Endothelial cell of umbilical vein (primary cell): ENCODE measurements at regions of chr2 and their contacts with region 1.

Region 1: DNA sequence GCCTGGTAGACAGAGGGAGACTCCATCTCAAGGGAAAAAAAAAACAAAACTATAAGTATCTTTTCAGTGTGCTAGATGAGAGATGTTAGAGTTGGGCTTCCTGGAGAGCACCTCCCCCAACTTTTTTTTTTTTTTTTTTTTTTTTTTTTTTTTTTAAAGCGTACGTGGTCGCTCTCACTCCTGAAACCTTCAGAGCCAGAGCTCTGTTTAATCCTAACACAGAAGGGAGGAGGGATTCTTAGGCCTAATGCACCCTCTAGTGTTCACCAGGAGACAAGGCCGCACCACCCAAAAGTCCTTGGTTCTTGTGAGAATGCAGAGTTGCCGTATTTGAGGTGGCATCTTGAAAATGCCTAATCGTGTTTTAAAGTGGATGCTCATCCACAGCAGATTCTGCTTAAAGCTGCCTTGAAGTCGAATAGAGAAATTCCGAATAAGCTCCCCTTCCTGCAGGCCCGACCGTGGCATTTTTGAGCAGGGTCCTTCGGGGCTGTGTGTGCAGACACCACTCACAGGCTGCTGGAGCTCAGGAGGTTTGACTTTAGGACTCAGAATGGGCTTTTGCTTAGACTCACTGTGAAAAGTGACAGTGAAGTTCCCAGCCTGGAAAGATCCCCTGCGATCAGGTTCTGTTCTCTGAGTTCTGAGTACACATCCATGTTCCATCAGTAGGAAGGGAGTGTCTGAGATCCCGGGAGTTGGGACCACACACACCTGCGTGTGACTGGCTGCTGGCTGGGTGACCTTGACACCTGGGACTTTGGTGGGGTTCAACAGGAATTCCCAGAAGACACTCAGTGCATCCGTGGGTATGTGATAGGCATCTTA is 252.6 kb downstream of the AGAP1 start:
- DNase-seq: peak; percentile 77
- H3K4me3 ChIP-seq: no peak overlapping the region
- H3K27ac ChIP-seq: no peak overlapping the region
- H3K4me1 ChIP-seq: no peaks in the 10 kb centered on the region
- H3K27me3 ChIP-seq: no peaks in the 10 kb centered on the region
- CTCF ChIP-seq: peak; percentile 80 to 82
- POLR2A ChIP-seq: no peak

Region 2: GRCh38 chr2:234650911-234651310 is 1095.6 kb before region 1 on chr2:
- CTCF ChIA-PET with region 1: no interaction called
- POLR2A ChIA-PET with region 1: no interaction called
- dilution Hi-C with region 1: no loop called
- intact Hi-C with region 1: no loop called
- DNase-seq: no peak
- H3K4me3 ChIP-seq: no peak overlapping the region
- H3K27ac ChIP-seq: no peak overlapping the region
- H3K4me1 ChIP-seq: no peaks in the 10 kb centered on the region
- H3K27me3 ChIP-seq: peaks cover 0 to 5% of the 10 kb centered on the region in 2 experiments
- CTCF ChIP-seq: no peak
- POLR2A ChIP-seq: no peak

Region 3: GRCh38 chr2:235129850-235130249 is 616.6 kb before region 1 on chr2:
- CTCF ChIA-PET with region 1: interaction called, 80 read pairs
- POLR2A ChIA-PET with region 1: no interaction called
- dilution Hi-C with region 1: no loop called
- intact Hi-C with region 1: no loop called
- DNase-seq: no peak
- H3K4me3 ChIP-seq: no peak overlapping the region
- H3K27ac ChIP-seq: no peak overlapping the region
- H3K4me1 ChIP-seq: peaks cover 2% of the 10 kb centered on the region
- H3K27me3 ChIP-seq: peaks cover 4% of the 10 kb centered on the region in 2 experiments
- CTCF ChIP-seq: no peak
- POLR2A ChIP-seq: no peak

Region 4: DNA sequence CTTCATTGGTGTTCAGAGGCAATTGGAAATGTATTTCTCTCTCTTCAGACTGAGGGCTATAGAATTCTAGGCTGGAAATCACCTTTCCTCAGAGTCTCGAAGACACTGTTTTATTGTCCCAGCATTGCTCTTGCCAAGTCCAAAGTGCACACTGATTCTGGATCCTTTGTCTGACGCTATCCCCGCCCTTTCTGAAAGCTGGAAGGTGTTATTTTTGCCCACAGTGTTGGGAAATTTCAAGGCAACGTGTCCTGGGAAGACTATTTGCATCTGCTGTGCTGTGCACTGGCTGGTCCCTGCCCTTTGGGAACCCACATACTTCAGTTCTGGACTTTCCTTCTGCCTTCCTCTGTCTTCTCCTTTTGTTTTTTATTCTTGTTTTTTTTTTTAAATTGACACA is 603.9 kb before region 1 on chr2:
- CTCF ChIA-PET with region 1: interaction called, 80 read pairs
- POLR2A ChIA-PET with region 1: no interaction called
- dilution Hi-C with region 1: no loop called
- intact Hi-C with region 1: no loop called
- DNase-seq: no peak
- H3K4me3 ChIP-seq: no peak overlapping the region
- H3K27ac ChIP-seq: no peak overlapping the region
- H3K4me1 ChIP-seq: no peaks in the 10 kb centered on the region
- H3K27me3 ChIP-seq: no peaks in the 10 kb centered on the region
- CTCF ChIP-seq: no peak
- POLR2A ChIP-seq: no peak

Region 5: DNA sequence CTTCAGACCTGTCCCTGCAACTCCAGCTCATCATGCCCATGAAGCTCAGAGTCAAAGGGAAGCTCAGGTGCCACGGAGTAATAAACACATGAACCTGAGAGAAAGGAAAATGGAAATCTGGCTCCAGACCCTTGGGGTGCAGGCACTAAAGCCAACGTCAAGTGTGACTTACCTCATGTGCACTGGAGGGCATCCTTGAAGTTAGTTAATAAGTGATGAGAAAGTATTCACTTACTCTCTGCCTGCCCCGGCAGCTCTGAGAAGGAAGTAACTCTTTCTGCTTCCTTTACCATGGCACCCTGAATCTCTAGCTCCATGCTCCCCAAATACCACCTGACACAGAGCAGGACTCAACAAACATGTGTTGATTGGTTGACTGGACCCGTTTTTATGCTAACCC is 274.0 kb before region 1 on chr2:
- CTCF ChIA-PET with region 1: no interaction called
- POLR2A ChIA-PET with region 1: no interaction called
- dilution Hi-C with region 1: no loop called
- intact Hi-C with region 1: no loop called
- DNase-seq: no peak
- H3K4me3 ChIP-seq: no peak overlapping the region
- H3K27ac ChIP-seq: no peak overlapping the region
- H3K4me1 ChIP-seq: no peaks in the 10 kb centered on the region
- H3K27me3 ChIP-seq: no peaks in the 10 kb centered on the region
- CTCF ChIP-seq: no peak
- POLR2A ChIP-seq: no peak

Region 6: GRCh38 chr2:235563051-235563910 is 183.2 kb before region 1 on chr2:
- CTCF ChIA-PET with region 1: no interaction called
- POLR2A ChIA-PET with region 1: no interaction called
- dilution Hi-C with region 1: no loop called
- intact Hi-C with region 1: no loop called
- DNase-seq: peak; percentile 46
- H3K4me3 ChIP-seq: no peak overlapping the region
- H3K27ac ChIP-seq: no peak overlapping the region
- H3K4me1 ChIP-seq: peaks cover 12% of the 10 kb centered on the region
- H3K27me3 ChIP-seq: no peaks in the 10 kb centered on the region
- CTCF ChIP-seq: no peak
- POLR2A ChIP-seq: no peak

Region 7: GRCh38 chr2:235614900-235615712 is 131.4 kb before region 1 on chr2:
- CTCF ChIA-PET with region 1: interaction called, 12 read pairs
- POLR2A ChIA-PET with region 1: no interaction called
- dilution Hi-C with region 1: no loop called
- intact Hi-C with region 1: no loop called
- DNase-seq: peak; percentile 59
- H3K4me3 ChIP-seq: no peak overlapping the region
- H3K27ac ChIP-seq: no peak overlapping the region
- H3K4me1 ChIP-seq: peaks cover 2% of the 10 kb centered on the region
- H3K27me3 ChIP-seq: no peaks in the 10 kb centered on the region
- CTCF ChIP-seq: no peak
- POLR2A ChIP-seq: no peak

Region 8: GRCh38 chr2:235721625-235722024 is 24.8 kb before region 1 on chr2:
- CTCF ChIA-PET with region 1: interaction called, 13 read pairs
- POLR2A ChIA-PET with region 1: no interaction called
- dilution Hi-C with region 1: no loop called
- intact Hi-C with region 1: no loop called
- DNase-seq: no peak
- H3K4me3 ChIP-seq: no peak overlapping the region
- H3K27ac ChIP-seq: no peak overlapping the region
- H3K4me1 ChIP-seq: no peaks in the 10 kb centered on the region
- H3K27me3 ChIP-seq: no peaks in the 10 kb centered on the region
- CTCF ChIP-seq: no peak
- POLR2A ChIP-seq: no peak

Region 9: GRCh38 chr2:235734688-235735231 is 11.7 kb before region 1 on chr2:
- CTCF ChIA-PET with region 1: interaction called, 11 read pairs
- POLR2A ChIA-PET with region 1: no interaction called
- dilution Hi-C with region 1: no loop called
- intact Hi-C with region 1: no loop called
- DNase-seq: no peak
- H3K4me3 ChIP-seq: no peak overlapping the region
- H3K27ac ChIP-seq: no peak overlapping the region
- H3K4me1 ChIP-seq: no peaks in the 10 kb centered on the region
- H3K27me3 ChIP-seq: no peaks in the 10 kb centered on the region
- CTCF ChIP-seq: no peak
- POLR2A ChIP-seq: no peak